Transverse colon (tissue), 4 donors: ENCODE measurements at regions of chr12 and their contacts with region 1.

Region 1: GRCh38 chr12:56189176-56189917 is at the start of gene SMARCC2:
- DNase-seq: peak; percentile 94
- H3K4me3 ChIP-seq: peak within 1 kb of the TSS; percentile 87 to 99 (median 98)
- H3K27ac ChIP-seq: peak within 1 kb of the TSS; percentile 95 to 100 (median 99)
- H3K4me1 ChIP-seq: peaks cover 12 to 28% (median 22%) of the 10 kb centered on the region in 4 donors
- H3K27me3 ChIP-seq: no peaks in the 10 kb centered on the region
- CTCF ChIP-seq: peak; percentile 65 to 82 (median 74)
- EP300 ChIP-seq: no peak
- POLR2A ChIP-seq: peak; percentile 56
- total RNA-seq, gene SMARCC2: 63.8 to 231 (median 135) TPM

Region 2: DNA sequence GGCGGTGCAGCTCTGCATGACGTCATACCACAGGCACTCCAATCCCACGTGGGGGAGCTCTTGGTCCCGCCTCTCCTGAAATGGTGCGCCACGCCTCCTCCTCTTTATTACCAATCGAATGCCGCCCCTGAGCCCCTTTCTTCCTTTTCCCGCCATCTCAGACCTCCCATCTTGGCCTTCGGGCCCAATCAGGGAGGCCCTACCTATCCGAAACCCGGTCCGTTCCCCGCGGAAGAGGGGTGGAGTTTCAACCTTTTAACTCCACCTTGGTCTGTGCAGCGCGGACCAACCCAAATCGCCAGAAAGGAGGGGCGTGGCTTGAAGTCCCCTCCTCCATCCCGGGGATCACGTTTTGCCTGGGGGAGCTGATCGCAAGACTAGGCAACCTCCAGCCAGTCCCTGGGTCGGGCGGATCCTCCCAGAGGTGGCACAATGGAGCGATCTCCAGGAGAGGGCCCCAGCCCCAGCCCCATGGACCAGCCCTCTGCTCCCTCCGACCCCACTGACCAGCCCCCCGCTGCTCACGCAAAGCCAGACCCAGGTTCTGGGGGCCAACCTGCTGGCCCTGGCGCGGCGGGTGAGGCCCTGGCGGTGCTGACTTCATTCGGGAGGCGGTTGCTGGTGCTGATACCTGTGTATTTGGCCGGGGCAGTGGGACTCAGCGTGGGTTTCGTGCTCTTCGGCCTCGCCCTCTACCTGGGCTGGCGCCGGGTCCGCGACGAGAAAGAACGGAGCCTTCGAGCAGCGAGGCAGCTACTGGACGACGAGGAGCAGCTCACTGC is 61.3 kb before region 1 on chr12 and contains the start of gene ESYT1:
- in situ Hi-C with region 1: loop called in 2 of 4 experiments (anchors 5 to 10 kb)
- intact Hi-C with region 1: no loop called
- DNase-seq: peak; percentile 99
- H3K4me3 ChIP-seq: peak within 1 kb of the TSS; percentile 45 to 85 (median 76)
- H3K27ac ChIP-seq: peak within 1 kb of the TSS; percentile 92 to 98 (median 94)
- H3K4me1 ChIP-seq: peaks cover 16 to 41% (median 32%) of the 10 kb centered on the region in 4 donors
- H3K27me3 ChIP-seq: no peaks in the 10 kb centered on the region
- CTCF ChIP-seq: peak in 1 of 5 experiments; percentile 10
- EP300 ChIP-seq: no peak
- POLR2A ChIP-seq: peak; percentile 97
- total RNA-seq, gene ESYT1: 94.2 to 133 (median 97.9) TPM

Region 3: GRCh38 chr12:56224102-56224701 is 34.9 kb after region 1 on chr12 and contains the start of gene NABP2:
- in situ Hi-C with region 1: no loop called
- intact Hi-C with region 1: loop called (anchors 2 kb)
- DNase-seq: peak; percentile 99
- H3K4me3 ChIP-seq: peak within 1 kb of the TSS; percentile 31 to 80 (median 52)
- H3K27ac ChIP-seq: peak within 1 kb of the TSS; percentile 96 to 99 (median 98)
- H3K4me1 ChIP-seq: peaks cover 28 to 47% (median 39%) of the 10 kb centered on the region in 4 donors
- H3K27me3 ChIP-seq: no peaks in the 10 kb centered on the region
- CTCF ChIP-seq: peak; percentile 80 to 98 (median 89)
- EP300 ChIP-seq: no peak
- POLR2A ChIP-seq: peak; percentile 56
- total RNA-seq, gene NABP2: 4.9 to 26.8 (median 15.5) TPM